HepG2 (cell line): ENCODE measurements at regions of chr10 and their contacts with region 1.

Region 1: GRCh38 chr10:79059859-79060379 is 8.8 kb upstream of the ZMIZ1 start:
- DNase-seq: peak; percentile 86
- ATAC-seq: peak; percentile 68
- H3K4me3 ChIP-seq: peak overlapping the region; percentile 8 to 58 (median 27)
- H3K27ac ChIP-seq: peak overlapping the region; percentile 91
- H3K4me1 ChIP-seq: peaks cover 99% of the 10 kb centered on the region
- H3K27me3 ChIP-seq: no peaks in the 10 kb centered on the region
- CTCF ChIP-seq: no peak
- EP300 ChIP-seq: peak in 1 of 2 experiments; percentile 73; a peak in 1 of 4 replicates
- POLR2A ChIP-seq: peak in 1 of 2 experiments; percentile 49; a peak in 2 of 4 replicates
- RAD21 ChIP-seq: no peak

Region 2: GRCh38 chr10:79073784-79074432 is 14.0 kb after region 1 on chr10:
- CTCF ChIA-PET with region 1: no interaction called
- POLR2A ChIA-PET with region 1: interaction called, 33 read pairs
- in situ Hi-C with region 1: no loop called
- intact Hi-C with region 1: no loop called
- DNase-seq: peak; percentile 61
- ATAC-seq: peak; percentile 1; the same call in 2 of the 3 replicates
- H3K4me3 ChIP-seq: peak overlapping the region in 2 of 3 experiments; percentile 18 to 98; a peak in 4 of 6 replicates
- H3K27ac ChIP-seq: peak overlapping the region; percentile 91
- H3K4me1 ChIP-seq: peaks cover 76% of the 10 kb centered on the region
- H3K27me3 ChIP-seq: no peaks in the 10 kb centered on the region; a peak in 1 of 5 replicates
- CTCF ChIP-seq: no peak
- EP300 ChIP-seq: no peak
- POLR2A ChIP-seq: no peak
- RAD21 ChIP-seq: no peak